Left ventricle myocardium inferior (tissue), 1 donor: ENCODE measurements at regions of chr5 and their contacts with region 1.

Region 1: DNA sequence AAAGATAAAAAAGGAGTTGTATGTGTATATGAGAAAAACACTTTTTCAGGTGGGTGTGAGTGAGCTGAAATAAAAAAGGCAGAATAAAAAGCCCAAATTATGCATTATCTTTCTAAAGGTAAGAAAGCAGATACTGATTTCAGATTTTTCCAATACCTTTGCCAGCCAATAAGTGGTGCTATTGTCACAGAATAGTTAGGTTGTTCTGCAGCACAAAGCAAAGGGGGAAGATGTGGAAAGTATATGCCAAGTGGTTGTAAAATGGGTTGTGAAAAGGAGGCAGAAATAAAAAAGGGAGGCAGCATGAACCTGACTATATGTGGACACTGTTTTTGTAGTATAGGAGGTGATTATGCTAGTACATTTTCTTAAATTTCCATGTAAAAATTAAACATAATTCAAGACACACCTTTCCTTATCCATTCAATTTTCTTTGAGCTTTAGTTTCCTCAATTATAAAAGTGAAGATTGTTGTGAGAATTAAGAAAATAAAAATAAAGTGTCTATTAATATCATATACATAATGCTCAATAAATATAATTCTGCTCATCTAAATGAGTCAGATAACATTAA is 106.7 kb downstream of the SMIM15 start:
- DNase-seq: no peak
- H3K4me3 ChIP-seq: no peak overlapping the region
- H3K27ac ChIP-seq: no peak overlapping the region
- H3K4me1 ChIP-seq: no peaks in the 10 kb centered on the region
- H3K27me3 ChIP-seq: no peaks in the 10 kb centered on the region
- CTCF ChIP-seq: peak; percentile 68

Region 2: DNA sequence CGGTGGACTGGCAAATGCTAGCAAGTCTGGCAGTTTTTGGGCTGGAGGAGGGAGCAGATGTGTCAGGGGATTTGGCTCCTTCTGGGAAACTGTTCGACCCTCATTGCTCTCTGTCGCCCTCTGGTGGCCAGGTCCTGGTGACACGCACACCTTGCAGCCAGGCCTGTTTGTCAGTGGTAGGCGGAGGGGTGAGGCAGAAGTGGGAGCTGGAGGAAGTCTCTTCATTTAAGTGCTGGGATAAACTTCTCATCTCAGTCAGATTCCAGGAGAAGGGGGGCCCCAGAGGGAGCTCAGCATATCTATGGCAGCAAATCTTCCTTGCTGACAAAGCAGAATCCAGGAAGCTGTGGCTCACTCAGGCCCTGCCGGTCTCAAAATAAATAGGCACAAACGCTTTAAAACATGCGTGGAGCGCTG is 603.1 kb after region 1 on chr5:
- intact Hi-C with region 1: loop called (anchors 10 kb)
- DNase-seq: peak; percentile 82
- H3K4me3 ChIP-seq: peak overlapping the region; percentile 48
- H3K27ac ChIP-seq: peak overlapping the region; percentile 72
- H3K4me1 ChIP-seq: peaks cover 10% of the 10 kb centered on the region
- H3K27me3 ChIP-seq: no peaks in the 10 kb centered on the region
- CTCF ChIP-seq: peak; percentile 94